Ascending aorta (tissue), 2 donors: ENCODE measurements at regions of chr10 and their contacts with region 1.

Region 1: GRCh38 chr10:84328418-84329195 is at the start of gene CCSER2:
- DNase-seq: peak in 1 of 2 donors; percentile 99
- H3K4me3 ChIP-seq: peak within 1 kb of the TSS; percentile 85 to 99
- H3K27ac ChIP-seq: peak within 1 kb of the TSS; percentile 88 to 97
- H3K4me1 ChIP-seq: peaks cover 0 to 16% of the 10 kb centered on the region in 2 donors
- H3K27me3 ChIP-seq: no peaks in the 10 kb centered on the region
- CTCF ChIP-seq: peak in 1 of 3 experiments; percentile 21
- total RNA-seq, gene CCSER2: 18.5 TPM

Region 2: DNA sequence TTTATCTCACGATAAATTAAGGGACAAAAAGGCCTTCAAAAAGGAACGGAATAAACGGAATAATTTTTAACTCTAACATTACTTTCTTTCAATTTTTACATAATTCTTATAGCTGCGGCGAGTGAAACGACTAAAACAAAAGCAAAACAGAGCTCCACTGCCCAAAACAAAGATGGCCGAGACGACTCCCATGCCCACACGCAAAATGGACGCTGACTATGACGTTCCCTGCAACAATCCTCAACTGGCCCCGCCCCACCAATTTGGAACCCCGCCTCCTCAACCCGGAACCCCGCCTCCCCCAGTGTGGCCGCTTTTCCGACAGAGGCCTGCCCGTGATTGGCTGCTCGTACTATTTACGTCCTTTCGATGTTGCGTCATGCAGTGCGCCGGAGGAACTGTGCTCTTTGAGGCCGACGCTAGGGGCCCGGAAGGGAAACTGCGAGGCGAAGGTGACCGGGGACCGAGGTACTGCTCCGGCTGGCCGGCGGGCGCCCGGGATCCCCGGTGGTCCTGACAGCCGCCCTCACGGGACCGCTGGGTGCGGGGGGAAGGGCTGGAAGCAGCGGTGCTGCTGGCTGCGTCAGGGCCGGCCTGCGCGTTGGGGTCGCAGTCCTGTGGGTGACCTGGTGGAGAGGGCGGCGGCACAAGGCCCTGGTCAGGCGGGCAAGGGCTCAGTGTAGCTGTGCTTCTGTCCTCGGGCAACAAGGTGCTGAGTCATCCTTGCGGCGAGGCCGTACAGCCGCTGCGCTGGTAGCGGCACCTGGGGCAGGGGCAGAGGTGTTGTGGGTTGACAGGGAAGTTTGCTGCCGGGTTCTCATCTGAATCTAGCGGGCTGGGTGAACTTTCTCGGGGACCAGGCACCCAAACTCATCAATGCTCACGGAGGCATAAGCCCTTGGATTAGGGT is 189.2 kb before region 1 on chr10 and contains the start of gene GHITM:
- intact Hi-C with region 1: loop called (anchors 1 kb)
- DNase-seq: peak; percentile 95 to 99
- H3K4me3 ChIP-seq: peak within 1 kb of the TSS; percentile 87 to 99
- H3K27ac ChIP-seq: peak within 1 kb of the TSS; percentile 96 to 97
- H3K4me1 ChIP-seq: peaks cover 5 to 13% of the 10 kb centered on the region in 2 donors
- H3K27me3 ChIP-seq: no peaks in the 10 kb centered on the region
- CTCF ChIP-seq: peak; percentile 37 to 62 (median 43)
- total RNA-seq, gene GHITM: 77.2 TPM

Region 3: DNA sequence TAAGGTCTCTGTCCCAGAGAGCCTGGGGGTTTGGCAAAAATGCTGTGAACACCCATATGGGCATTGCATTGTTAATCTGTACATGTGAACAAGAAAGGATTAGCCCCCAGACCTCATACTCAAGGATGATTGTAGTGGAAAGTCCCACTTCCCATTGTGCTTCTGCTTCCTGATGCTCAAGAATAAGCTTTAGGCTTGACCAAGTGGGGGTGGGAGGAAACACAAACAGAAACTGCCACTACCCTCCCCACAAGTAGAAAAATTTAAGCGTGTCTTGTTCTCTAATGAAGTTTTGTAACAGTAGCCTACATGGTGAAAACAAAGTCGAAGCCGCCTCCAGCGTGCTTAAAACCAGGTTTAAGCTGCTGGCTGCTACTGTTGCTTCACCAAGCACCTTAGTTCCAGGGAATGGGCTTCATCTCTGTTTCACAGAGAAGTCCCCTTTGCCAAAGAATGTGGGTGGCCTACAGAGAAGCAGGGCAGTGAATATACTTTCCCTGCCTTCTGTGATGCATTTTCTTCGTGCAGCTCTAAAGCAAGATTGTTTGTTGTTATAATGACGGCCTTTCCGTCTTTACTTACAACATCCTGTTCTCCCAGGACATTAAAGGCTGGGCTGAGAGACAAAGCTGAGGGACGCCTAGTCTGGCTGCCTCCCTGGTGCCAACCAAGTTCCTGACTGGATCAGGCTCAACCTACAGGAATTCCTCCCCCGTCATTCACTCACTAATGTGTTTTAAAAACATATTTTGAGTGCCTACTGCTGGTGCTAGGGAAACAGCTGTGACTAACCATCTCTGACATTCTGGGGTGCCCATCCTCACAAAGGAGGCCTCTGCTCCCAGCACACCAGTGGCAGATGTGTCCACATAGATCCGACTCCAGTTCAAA is 32.3 kb before region 1 on chr10:
- intact Hi-C with region 1: loop called (anchors 2 kb)
- DNase-seq: peak in 1 of 2 donors; percentile 83
- H3K4me3 ChIP-seq: no peak overlapping the region
- H3K27ac ChIP-seq: peak overlapping the region; percentile 67 to 72
- H3K4me1 ChIP-seq: peaks cover 0 to 28% of the 10 kb centered on the region in 2 donors
- H3K27me3 ChIP-seq: no peaks in the 10 kb centered on the region
- CTCF ChIP-seq: no peak

Region 4: GRCh38 chr10:84352251-84352842 is 23.7 kb after region 1 on chr10:
- intact Hi-C with region 1: loop called (anchors 1 kb)
- DNase-seq: peak in 1 of 2 donors; percentile 72
- H3K4me3 ChIP-seq: no peak overlapping the region
- H3K27ac ChIP-seq: no peak overlapping the region
- H3K4me1 ChIP-seq: peaks cover 4 to 14% of the 10 kb centered on the region in 2 donors
- H3K27me3 ChIP-seq: no peaks in the 10 kb centered on the region
- CTCF ChIP-seq: peak; percentile 56 to 76 (median 59)

Region 5: GRCh38 chr10:84424731-84425167 is 96.1 kb after region 1 on chr10:
- intact Hi-C with region 1: loop called (anchors 2 kb)
- DNase-seq: peak; percentile 71 to 94
- H3K4me3 ChIP-seq: peak overlapping the region; percentile 36 to 38
- H3K27ac ChIP-seq: peak overlapping the region; percentile 73 to 85
- H3K4me1 ChIP-seq: peaks cover 0 to 23% of the 10 kb centered on the region in 2 donors
- H3K27me3 ChIP-seq: no peaks in the 10 kb centered on the region
- CTCF ChIP-seq: no peak